ENCODE measurements at regions of chr2 and their contacts with region 1.

Region 1: DNA sequence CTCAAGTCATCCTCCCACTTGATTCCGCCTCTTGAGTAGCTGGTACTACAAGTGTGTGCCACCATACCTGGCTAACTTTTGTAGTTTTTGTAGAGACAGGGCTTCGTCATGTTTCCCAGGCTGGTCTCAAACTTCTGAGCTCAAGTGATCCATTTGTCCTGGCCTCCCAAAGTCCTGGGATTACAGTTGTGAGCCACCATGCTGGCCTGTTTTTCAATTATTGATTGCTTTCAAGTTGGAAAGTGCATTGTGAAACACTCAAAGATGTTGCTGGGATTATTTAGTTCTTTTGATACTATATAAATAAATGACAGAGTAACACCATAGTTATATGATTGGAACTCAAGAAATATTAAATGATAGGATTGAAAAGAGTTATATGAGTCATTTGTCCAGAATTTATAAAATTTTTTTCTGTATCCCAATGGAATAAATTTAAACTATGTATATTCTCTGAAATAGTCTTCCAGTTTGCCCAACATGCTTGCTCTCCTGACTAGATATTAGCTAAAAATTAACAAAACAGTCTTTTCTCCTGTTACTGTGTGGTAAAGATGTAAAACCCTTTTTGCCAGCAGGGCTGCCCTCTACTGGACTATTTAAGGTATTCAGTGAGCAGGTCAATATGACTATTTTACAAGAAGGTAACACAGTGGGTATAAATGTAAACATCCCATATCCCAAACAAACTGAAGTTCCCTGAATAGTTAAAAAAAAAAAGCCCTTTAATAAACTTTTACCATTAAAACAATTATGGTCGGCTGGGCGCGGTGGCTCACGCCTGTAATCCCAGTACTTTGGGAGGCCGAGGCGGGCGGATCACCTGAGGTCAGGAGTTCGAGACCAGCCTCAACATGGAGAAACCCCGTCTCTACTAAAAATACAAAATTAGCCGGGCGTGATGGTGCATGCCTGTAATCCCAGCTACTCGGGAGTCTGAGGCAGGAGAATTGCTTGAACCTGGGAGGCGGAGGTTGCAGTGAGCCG is 42.7 kb downstream of the ACSL3 start:
- DNase-seq: no peak
- H3K4me3 ChIP-seq: no peak overlapping the region
- H3K27ac ChIP-seq: peak overlapping the region; percentile 3 to 63 (median 38)
- H3K4me1 ChIP-seq: peaks cover 35 to 88% (median 65%) of the 10 kb centered on the region in 4 donors
- H3K27me3 ChIP-seq: no peaks in the 10 kb centered on the region
- CTCF ChIP-seq: peak; percentile 57 to 75 (median 68)
- EP300 ChIP-seq: no peak
- POLR2A ChIP-seq: no peak

Region 2: DNA sequence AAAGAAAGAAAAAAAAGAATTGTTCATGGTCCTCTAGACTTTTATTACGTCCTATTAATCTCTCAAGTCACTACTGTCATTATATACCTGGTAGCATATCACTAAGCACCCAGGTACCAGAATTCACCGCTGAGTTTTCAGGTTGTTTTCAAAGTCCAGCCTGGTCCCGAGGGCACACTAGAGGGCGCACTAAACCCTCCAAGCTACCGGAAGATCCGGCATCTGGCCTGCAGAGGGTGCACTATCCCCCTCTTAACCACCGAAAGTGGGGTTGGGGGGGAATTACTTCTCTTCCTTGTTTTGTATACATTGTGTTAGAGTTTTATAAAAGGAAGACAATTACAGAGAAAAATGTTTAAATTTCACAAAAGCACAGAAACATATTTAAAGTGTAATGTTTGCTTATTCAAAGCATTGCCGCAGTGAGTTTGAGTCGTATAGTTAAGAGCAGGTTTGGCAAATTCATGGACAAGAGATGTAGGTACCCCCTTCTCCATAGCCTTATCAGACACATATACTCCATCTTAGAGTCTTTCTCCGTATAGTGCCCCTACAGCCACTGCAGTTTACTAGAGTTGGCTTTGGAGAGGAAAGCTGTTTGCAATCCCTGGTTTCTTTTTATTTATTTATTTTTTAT is 212.8 kb before region 1 on chr2:
- intact Hi-C with region 1: loop called (anchors 5 kb)
- DNase-seq: no peak
- H3K4me3 ChIP-seq: no peak overlapping the region
- H3K27ac ChIP-seq: no peak overlapping the region
- H3K4me1 ChIP-seq: no peaks in the 10 kb centered on the region
- H3K27me3 ChIP-seq: no peaks in the 10 kb centered on the region
- CTCF ChIP-seq: peak; percentile 93 to 98 (median 94)
- EP300 ChIP-seq: no peak
- POLR2A ChIP-seq: no peak

Region 3: GRCh38 chr2:222707689-222708525 is 195.6 kb before region 1 on chr2:
- intact Hi-C with region 1: loop called (anchors 5 kb)
- DNase-seq: peak; percentile 94
- H3K4me3 ChIP-seq: no peak overlapping the region
- H3K27ac ChIP-seq: no peak overlapping the region
- H3K4me1 ChIP-seq: peaks cover 14 to 44% (median 40%) of the 10 kb centered on the region in 4 donors
- H3K27me3 ChIP-seq: no peaks in the 10 kb centered on the region
- CTCF ChIP-seq: peak; percentile 93 to 97 (median 97)
- EP300 ChIP-seq: no peak
- POLR2A ChIP-seq: no peak

Region 4: GRCh38 chr2:222797261-222797660 is 106.3 kb before region 1 on chr2:
- intact Hi-C with region 1: loop called (anchors 5 kb)
- DNase-seq: no peak
- H3K4me3 ChIP-seq: no peak overlapping the region
- H3K27ac ChIP-seq: peak overlapping the region in 3 of 4 donors; percentile 21 to 52 (median 50)
- H3K4me1 ChIP-seq: peaks cover 19 to 40% (median 32%) of the 10 kb centered on the region in 4 donors
- H3K27me3 ChIP-seq: no peaks in the 10 kb centered on the region
- CTCF ChIP-seq: peak; percentile 30 to 51 (median 38)
- EP300 ChIP-seq: no peak
- POLR2A ChIP-seq: no peak

Region 5: DNA sequence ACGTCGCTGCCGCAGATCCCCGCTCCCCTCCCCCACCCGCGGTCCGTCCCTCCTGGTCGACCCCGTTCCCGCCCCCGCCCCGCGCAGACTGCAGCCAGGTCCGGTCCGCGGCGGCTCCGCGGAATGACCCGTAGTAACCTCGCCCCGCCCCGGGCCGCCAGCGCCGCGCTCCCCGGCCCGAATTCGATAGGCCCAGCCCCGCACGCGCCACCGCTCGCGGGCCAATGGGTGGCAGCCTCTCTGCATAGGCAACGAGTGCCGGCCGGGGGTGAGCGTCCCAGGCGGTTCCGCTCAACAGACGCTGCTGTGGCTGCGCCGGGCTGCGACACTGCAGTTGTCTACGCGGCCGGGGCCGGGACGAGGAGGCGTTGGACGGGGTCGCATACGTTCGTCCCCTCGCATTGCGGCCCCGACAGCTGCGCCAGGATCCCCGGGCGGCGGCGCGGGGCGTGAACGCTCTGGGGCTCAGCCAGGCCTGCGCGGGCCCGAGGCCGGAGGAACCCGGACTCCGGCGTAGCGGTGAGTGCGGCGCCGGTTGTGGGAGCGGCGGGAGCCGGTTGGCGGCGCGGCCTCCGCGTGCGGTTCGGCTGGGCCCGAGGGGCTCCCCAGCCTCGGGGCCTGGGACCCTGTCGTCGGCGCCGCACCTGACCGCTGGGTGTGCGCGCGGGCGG is 42.7 kb before region 1 on chr2 and contains the start of gene ACSL3:
- intact Hi-C with region 1: loop called (anchors 5 kb)
- DNase-seq: peak; percentile 99
- H3K4me3 ChIP-seq: peak within 1 kb of the TSS; percentile 92 to 98 (median 94)
- H3K27ac ChIP-seq: peak within 1 kb of the TSS; percentile 98
- H3K4me1 ChIP-seq: peaks cover 44 to 54% (median 49%) of the 10 kb centered on the region in 4 donors
- H3K27me3 ChIP-seq: no peaks in the 10 kb centered on the region
- CTCF ChIP-seq: no peak
- EP300 ChIP-seq: no peak
- POLR2A ChIP-seq: peak; percentile 96
- total RNA-seq, gene ACSL3: 31.1 to 56.3 (median 52.5) TPM

Measured in esophagus muscularis mucosa (tissue), 4 donors.